ENCODE measurements at regions of chr18 and their contacts with region 1.

Region 1: DNA sequence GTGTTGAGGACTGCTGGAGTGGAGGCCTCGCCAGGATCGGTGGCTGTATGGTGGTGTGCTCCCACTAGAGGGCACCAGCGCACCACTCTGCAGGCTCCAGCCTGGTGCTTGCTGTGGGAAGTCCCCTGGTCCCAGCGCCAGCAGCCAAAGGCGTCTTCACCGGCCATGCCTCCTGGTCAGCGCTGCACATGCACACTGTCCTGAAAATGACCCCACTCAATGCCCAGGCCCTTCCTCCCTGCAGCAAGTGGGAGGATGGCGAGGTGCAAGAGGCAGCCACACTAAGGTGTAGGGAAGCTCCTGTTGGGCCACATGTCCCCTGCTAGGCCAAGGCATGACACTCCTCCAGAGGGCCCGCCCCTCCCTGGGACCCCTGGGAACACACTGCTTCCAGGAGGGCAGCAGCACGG is 136.5 kb downstream of the CTIF start:
- DNase-seq: peak; percentile 89
- H3K4me3 ChIP-seq: no peak overlapping the region
- H3K27ac ChIP-seq: no peak overlapping the region
- H3K4me1 ChIP-seq: peaks cover 69% of the 10 kb centered on the region
- H3K27me3 ChIP-seq: no peaks in the 10 kb centered on the region
- CTCF ChIP-seq: peak; percentile 98

Region 2: DNA sequence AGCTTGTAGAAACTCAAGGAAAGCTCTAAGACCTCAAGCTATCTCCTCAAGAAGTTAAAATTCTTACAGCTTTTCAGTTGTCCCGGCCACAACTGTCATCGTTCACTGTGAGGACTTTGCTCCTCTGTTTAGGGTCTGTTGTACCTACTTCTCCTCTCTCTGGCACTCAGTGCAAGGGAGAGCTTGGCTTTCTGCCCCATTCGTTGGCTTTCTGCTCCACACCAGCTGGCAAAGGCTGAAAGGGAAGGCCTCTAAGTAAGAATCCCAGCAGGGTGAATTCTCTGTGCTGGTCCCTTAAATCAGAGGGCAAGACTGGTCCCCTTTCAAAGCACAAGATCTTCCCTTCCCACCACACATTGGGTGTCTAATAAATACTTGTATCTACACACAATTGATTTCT is 283.5 kb before region 1 on chr18:
- intact Hi-C with region 1: no loop called
- DNase-seq: peak; percentile 48
- H3K4me3 ChIP-seq: no peak overlapping the region
- H3K27ac ChIP-seq: peak overlapping the region; percentile 18
- H3K4me1 ChIP-seq: peaks cover 30% of the 10 kb centered on the region
- H3K27me3 ChIP-seq: peaks cover 6% of the 10 kb centered on the region
- CTCF ChIP-seq: no peak

Region 3: GRCh38 chr18:48613589-48614404 is 61.6 kb before region 1 on chr18:
- intact Hi-C with region 1: no loop called
- DNase-seq: peak; percentile 57
- H3K4me3 ChIP-seq: no peak overlapping the region
- H3K27ac ChIP-seq: peak overlapping the region; percentile 33
- H3K4me1 ChIP-seq: peaks cover 81% of the 10 kb centered on the region
- H3K27me3 ChIP-seq: no peaks in the 10 kb centered on the region
- CTCF ChIP-seq: no peak

Region 4: DNA sequence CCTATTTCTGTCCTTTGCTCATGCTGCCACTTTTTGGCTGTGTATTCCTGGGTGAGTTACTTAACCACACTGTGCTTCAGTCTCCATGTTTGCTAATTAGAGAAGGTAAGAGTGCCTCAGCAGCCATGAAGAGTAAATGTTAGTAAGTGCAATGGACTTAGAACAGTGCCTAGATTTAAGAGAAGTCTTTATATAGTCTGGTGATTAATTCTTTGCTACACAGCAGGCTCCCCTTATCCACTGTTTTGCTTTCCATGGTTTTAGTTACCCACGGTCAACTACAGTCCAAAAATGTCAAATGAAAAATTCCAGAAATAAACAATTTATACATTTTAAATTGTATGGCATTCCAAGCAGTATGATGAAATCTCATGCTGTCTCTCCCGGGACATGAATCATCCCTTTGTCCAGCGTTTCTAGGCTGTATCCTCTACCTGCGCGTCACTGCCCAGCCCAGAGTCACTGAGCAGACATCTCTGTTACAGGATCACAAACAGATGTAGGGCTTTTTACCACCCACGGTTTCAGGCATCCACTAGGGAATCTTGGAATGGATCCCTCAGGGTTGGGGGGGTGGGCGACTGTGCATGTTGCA is 45.5 kb before region 1 on chr18:
- intact Hi-C with region 1: no loop called
- DNase-seq: no peak
- H3K4me3 ChIP-seq: no peak overlapping the region
- H3K27ac ChIP-seq: no peak overlapping the region
- H3K4me1 ChIP-seq: peaks cover under 1% of the 10 kb centered on the region
- H3K27me3 ChIP-seq: no peaks in the 10 kb centered on the region
- CTCF ChIP-seq: no peak

Region 5: DNA sequence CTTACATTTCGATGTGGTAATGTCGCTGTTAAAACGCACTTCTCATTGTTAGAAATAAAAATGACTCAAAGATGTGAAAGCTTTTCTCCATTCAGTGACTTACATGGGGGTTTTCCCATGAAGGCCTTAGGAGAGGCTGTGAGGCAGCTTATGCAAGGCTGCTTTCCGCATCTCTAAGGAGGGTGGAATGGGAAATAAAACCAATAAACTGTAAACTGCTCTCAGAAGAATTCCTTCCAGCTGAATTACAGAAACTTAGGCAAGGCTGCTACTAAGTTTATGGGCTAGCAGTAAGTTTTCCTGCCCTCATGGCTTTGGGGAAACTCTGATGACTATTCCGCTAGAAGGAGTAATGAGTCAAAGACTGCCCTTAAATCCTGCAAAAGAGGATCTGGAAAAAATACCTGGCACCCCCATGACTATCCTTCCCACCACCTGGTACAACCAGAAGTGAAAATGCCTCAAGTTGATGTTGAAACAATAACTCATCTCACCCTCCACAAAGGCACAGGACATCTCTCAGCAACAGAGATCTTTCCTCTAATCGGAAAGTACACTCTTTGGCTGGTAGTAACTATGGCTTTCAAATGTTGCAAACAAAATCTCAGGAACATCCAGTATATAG is 373.2 kb after region 1 on chr18:
- intact Hi-C with region 1: loop called (anchors 5 kb)
- DNase-seq: no peak
- H3K4me3 ChIP-seq: no peak overlapping the region
- H3K27ac ChIP-seq: no peak overlapping the region
- H3K4me1 ChIP-seq: peaks cover 20% of the 10 kb centered on the region
- H3K27me3 ChIP-seq: no peaks in the 10 kb centered on the region
- CTCF ChIP-seq: no peak

Region 6: GRCh38 chr18:49412679-49413078 is 737.3 kb after region 1 on chr18:
- intact Hi-C with region 1: loop called (anchors 10 kb)
- DNase-seq: no peak
- H3K4me3 ChIP-seq: no peak overlapping the region
- H3K27ac ChIP-seq: peak overlapping the region; percentile 18
- H3K4me1 ChIP-seq: peaks cover 10% of the 10 kb centered on the region
- H3K27me3 ChIP-seq: no peaks in the 10 kb centered on the region
- CTCF ChIP-seq: no peak